Esophagus squamous epithelium (tissue), 5 donors: ENCODE measurements at regions of chr11 and their contacts with region 1.

Region 1: DNA sequence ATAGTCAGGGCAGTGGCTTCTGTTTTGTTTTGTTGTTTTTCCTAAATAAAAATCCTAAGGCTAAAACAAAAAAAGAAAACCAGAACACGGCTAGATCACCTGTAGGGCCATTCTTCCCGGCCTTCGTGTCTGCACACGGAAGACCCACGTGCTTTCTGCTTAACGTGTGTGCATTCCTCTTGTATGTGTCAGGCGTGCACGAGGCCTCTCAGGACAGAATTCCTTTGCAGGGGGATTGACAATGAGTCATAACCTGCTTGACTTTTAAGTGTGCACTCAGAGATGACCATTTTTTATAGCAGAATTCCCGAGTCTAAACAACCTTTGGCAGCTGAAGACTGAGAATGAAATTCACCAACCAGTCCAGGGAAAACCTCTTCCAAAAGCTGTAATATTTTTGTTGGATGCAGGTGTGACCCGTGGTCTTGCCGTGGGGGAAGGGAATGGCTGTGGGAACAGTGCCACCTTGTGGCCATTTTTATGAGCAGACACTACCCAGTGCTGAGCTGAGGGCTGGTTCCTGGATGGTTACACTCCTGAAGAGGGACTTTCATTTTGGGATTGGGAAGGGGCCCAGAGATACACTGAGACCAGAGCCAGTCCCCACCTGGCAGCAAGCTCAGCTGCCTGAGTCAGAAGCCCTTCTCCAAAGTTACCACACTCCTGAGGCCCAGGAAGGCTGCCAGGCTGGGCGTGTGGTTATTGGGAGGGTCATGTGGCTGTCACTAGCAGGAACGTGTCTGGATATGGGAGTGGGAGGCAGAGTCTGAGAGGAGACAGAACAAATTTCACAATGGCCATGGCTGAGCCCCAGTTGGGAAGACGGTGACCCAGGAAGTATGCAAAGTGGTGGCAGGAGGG is 35.8 kb upstream of the DKK3 start:
- DNase-seq: no peak
- H3K4me3 ChIP-seq: peak overlapping the region in 1 of 4 donors; percentile 6
- H3K27ac ChIP-seq: peak overlapping the region; percentile 35 to 62 (median 47)
- H3K4me1 ChIP-seq: peaks cover 9 to 25% (median 13%) of the 10 kb centered on the region in 3 donors
- H3K27me3 ChIP-seq: no peaks in the 10 kb centered on the region
- CTCF ChIP-seq: peak; percentile 89 to 95 (median 92)
- POLR2A ChIP-seq: no peak

Region 2: GRCh38 chr11:11798586-11799438 is 245.4 kb before region 1 on chr11:
- intact Hi-C with region 1: loop called (anchors 5 kb)
- DNase-seq: no peak
- H3K4me3 ChIP-seq: no peak overlapping the region
- H3K27ac ChIP-seq: no peak overlapping the region
- H3K4me1 ChIP-seq: no peaks in the 10 kb centered on the region
- H3K27me3 ChIP-seq: peaks cover 0 to 62% (median 0%) of the 10 kb centered on the region in 4 donors
- CTCF ChIP-seq: peak; percentile 71 to 93 (median 88)
- POLR2A ChIP-seq: no peak

Region 3: GRCh38 chr11:11966826-11967668 is 77.1 kb before region 1 on chr11:
- intact Hi-C with region 1: loop called (anchors 10 kb)
- DNase-seq: no peak
- H3K4me3 ChIP-seq: no peak overlapping the region
- H3K27ac ChIP-seq: no peak overlapping the region
- H3K4me1 ChIP-seq: peaks cover 0 to 22% (median 0%) of the 10 kb centered on the region in 3 donors
- H3K27me3 ChIP-seq: no peaks in the 10 kb centered on the region
- CTCF ChIP-seq: peak; percentile 2 to 75 (median 64)
- POLR2A ChIP-seq: no peak

Region 4: DNA sequence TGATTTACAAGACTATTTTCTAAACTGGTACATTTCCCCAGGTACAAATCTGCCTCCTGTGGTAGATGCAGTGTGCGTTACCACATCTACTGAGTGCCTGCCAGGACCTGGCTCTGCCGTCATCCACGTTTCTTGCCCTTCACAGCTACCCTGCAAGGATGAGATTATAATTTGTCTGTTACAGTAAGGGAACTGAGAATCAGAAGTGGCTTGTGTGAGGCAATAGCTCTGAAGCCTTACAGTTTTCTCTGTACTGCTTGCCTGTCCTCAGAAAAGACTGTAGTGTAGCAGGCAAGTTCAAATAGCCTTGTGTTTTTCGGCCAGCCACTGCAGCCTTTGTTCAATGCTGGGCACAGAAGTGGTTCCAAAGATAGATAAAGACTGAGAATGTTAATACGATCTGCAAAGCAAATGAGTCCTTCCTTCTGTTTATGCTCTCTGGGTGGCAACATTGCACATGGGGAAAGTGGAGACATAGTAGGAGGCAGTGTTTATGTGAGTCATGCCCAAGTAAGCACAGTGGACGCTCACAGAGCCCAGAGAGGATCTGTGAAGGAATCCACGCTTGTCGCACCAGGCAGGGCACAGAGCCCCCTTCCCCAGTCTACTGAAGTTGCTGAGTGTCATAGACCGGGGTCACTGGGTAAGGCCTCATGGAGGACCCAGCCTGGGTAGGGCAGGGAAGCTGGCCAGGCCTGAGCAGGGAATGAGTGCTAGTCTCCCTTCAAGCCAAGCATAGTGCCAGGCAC is 115.3 kb after region 1 on chr11:
- intact Hi-C with region 1: no loop called
- DNase-seq: no peak
- H3K4me3 ChIP-seq: no peak overlapping the region
- H3K27ac ChIP-seq: peak overlapping the region; percentile 67 to 90 (median 79)
- H3K4me1 ChIP-seq: peaks cover 0 to 76% (median 45%) of the 10 kb centered on the region in 3 donors
- H3K27me3 ChIP-seq: no peaks in the 10 kb centered on the region
- CTCF ChIP-seq: no peak
- POLR2A ChIP-seq: no peak

Region 5: DNA sequence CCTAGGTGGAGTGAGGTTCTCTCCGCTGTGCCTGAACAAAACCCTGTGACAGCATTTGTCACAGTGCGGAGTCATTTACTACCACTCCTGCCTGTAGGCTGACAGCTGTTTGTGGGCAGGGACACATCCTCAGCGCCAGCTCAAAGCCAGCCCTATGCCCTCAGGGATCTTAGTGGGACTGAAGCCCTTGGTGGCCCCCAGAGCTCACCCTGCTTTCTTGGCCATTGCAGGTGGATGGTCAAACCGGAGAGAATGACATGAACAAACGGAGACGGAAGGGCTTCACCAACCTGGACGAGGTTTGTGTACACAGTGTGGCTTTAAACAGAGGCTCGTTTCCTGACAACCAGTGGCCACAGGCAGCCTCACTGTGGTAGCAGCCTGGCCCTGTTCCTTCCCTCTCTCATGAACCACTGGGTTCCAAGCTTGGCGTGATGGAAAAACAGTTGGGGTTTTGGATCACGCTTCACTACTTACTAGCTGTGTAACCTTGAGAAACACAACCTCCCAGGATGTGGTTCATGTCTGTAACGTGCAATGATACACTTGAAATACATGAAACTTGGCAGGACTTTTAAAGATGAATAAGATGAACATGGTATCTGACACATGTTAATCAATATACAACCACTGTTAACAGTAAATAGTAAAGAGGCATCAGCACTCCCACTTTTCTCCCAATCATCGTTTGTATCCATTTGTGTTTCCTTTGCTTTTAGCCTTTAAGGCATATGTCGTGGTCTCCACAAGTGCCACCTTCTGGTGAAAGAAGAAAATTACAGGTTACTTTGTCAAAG is 192.0 kb after region 1 on chr11:
- intact Hi-C with region 1: loop called (anchors 5 kb)
- DNase-seq: no peak
- H3K4me3 ChIP-seq: no peak overlapping the region
- H3K27ac ChIP-seq: peak overlapping the region; percentile 6 to 83 (median 63)
- H3K4me1 ChIP-seq: peaks cover 0 to 17% (median 0%) of the 10 kb centered on the region in 3 donors
- H3K27me3 ChIP-seq: no peaks in the 10 kb centered on the region
- CTCF ChIP-seq: peak; percentile 23 to 78 (median 72)
- POLR2A ChIP-seq: no peak

Region 6: GRCh38 chr11:12281571-12282478 is 237.6 kb after region 1 on chr11:
- intact Hi-C with region 1: loop called (anchors 1 kb)
- DNase-seq: no peak
- H3K4me3 ChIP-seq: no peak overlapping the region
- H3K27ac ChIP-seq: no peak overlapping the region
- H3K4me1 ChIP-seq: peaks cover 0 to 18% (median 4%) of the 10 kb centered on the region in 3 donors
- H3K27me3 ChIP-seq: no peaks in the 10 kb centered on the region
- CTCF ChIP-seq: peak; percentile 72 to 100 (median 98)
- POLR2A ChIP-seq: no peak